ENCODE measurements at regions of chr2 and their contacts with region 1.

Region 1: DNA sequence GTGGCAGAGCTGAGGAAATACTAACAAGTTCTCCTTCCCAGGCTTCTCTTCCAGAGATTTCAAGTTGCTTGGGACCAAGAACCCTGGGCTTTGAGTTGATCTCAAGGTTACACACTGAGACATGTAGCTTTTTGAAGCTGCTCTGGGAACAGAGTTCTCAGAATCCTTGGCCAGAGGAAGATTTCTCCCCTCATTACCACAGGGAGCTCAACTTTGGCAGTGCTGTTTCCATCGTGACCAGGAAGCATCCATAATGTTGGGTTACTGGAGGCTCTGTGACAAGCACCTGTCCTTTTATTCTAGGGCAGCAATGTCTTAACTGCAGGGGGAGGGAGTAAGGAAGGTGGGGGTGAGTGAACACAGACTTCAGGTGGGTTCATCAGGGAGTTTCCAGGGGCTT is 41.5 kb upstream of the CHRNA1 start:
- DNase-seq: no peak
- ATAC-seq: no peak
- H3K4me3 ChIP-seq: no peak overlapping the region
- H3K4me3 Mint-ChIP-seq: no peak overlapping the region
- H3K27ac ChIP-seq: no peak overlapping the region
- H3K27ac Mint-ChIP-seq: no peak overlapping the region
- H3K4me1 ChIP-seq: no peaks in the 10 kb centered on the region
- H3K4me1 Mint-ChIP-seq: no peaks in the 10 kb centered on the region
- H3K27me3 ChIP-seq: no peaks in the 10 kb centered on the region
- H3K27me3 Mint-ChIP-seq: no peaks in the 10 kb centered on the region
- CTCF ChIP-seq: no peak

Region 2: DNA sequence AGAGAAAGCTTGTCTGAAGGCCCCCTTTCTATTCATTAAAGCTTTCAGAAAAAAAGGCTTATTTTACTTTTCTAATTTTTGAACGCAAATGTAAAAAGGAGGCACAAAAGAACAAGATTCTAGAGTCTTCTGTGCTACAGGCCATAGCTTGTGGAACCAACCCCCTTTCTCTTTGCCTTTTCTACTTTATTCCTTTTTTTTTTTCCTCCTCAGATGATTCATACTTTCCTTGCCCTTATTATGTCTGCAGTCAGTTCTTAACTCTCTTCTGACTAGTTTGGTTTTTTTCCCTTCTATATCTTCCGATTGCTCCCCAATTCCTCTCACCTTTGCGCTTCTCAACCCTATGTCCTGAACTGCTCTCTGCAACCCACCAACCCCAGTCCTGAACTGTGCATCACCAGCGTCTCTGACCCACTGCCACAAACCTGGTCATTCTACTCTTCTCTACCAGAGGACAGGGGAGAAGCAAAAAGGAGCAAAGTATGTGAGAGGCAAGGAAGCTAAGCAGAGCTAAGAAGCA is 151.3 kb before region 1 on chr2:
- CTCF ChIA-PET with region 1: no interaction called
- POLR2A ChIA-PET with region 1: no interaction called
- intact Hi-C with region 1: loop called in 1 of 2 experiments (anchors 1 kb)
- DNase-seq: no peak
- ATAC-seq: no peak
- H3K4me3 ChIP-seq: no peak overlapping the region
- H3K4me3 Mint-ChIP-seq: no peak overlapping the region
- H3K27ac ChIP-seq: no peak overlapping the region
- H3K27ac Mint-ChIP-seq: no peak overlapping the region
- H3K4me1 ChIP-seq: peaks cover 8% of the 10 kb centered on the region
- H3K4me1 Mint-ChIP-seq: peaks cover 26% of the 10 kb centered on the region
- H3K27me3 ChIP-seq: no peaks in the 10 kb centered on the region
- H3K27me3 Mint-ChIP-seq: no peaks in the 10 kb centered on the region
- CTCF ChIP-seq: no peak